Colonic mucosa (tissue), 4 donors: ENCODE measurements at regions of chr10 and their contacts with region 1.

Region 1: DNA sequence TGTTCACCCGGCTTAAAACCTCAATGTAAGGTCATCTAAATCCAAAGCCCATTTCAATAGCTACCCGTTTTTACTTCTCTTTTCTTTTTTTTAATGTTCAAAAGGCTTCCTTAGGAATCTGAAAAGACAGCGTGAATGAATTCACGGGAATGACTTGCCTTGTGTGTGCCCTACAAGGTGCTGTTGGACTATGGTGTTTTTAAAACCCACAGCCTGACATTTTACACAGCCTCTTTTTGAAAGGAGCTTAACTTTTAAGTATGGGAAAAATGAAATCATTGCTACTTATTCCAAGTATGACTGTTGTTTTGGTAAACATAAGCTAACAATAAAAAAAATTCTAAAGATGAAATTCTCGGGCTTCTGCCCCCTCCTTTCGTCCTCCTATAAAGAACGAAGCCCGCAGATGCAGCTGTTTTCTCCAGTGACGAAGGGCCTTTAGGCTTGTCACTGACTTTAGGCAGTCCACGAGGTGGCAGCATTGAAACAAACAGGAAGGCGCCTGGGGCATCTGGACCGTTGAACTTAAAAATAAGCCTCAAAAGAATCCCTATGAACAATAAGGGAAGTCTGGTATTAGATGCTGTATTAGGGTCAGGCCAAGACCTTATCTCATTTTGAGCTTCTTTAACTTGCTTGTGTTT is 141.3 kb downstream of the NRP1 start:
- DNase-seq: peak; percentile 86
- H3K4me3 ChIP-seq: no peak overlapping the region
- H3K27ac ChIP-seq: no peak overlapping the region
- H3K4me1 ChIP-seq: peaks cover 5% of the 10 kb centered on the region
- H3K27me3 ChIP-seq: no peaks in the 10 kb centered on the region
- CTCF ChIP-seq: peak; percentile 72

Region 2: GRCh38 chr10:32943854-32944661 is 249.1 kb before region 1 on chr10:
- intact Hi-C with region 1: no loop called
- DNase-seq: peak; percentile 42
- H3K4me3 ChIP-seq: no peak overlapping the region
- H3K27ac ChIP-seq: no peak overlapping the region
- H3K4me1 ChIP-seq: no peaks in the 10 kb centered on the region
- H3K27me3 ChIP-seq: no peaks in the 10 kb centered on the region
- CTCF ChIP-seq: no peak

Region 3: DNA sequence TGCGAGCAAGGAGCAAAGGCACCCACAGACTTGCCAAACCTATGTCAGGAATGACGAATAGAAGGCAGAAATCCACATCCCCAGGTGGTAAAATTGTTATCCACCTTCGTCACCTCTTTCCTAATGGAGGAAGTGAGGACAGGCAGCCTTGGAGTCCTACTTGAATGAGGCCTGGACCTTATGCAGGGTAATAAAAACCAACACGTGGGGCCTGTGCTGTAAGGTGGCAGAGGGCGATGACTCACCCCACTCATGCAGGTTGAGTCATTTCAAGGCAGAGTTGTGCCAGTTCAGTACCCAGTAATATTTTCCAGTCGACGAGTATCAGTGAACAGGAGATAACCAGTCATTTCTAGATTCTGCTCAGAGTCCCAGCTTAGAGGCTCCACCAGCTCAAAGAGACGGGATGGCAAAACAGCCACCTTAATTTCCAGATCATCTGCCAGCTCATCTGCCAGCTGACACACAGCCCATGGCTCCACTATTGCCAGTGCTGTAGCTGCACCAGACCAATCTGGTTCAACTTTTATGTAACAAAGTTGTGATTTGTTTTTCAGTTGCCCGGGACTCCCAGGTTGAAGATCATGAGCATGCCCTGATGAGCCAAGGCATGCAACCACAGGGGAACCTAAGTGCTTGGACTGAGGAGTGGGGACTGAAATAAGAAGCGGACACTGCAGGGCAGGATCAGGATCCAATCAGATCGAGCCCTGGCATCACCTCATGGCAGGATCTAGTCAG is 59.0 kb before region 1 on chr10:
- intact Hi-C with region 1: no loop called
- DNase-seq: peak; percentile 78
- H3K4me3 ChIP-seq: no peak overlapping the region
- H3K27ac ChIP-seq: peak overlapping the region; percentile 54
- H3K4me1 ChIP-seq: no peaks in the 10 kb centered on the region
- H3K27me3 ChIP-seq: no peaks in the 10 kb centered on the region
- CTCF ChIP-seq: no peak

Region 4: GRCh38 chr10:33330543-33331378 is 137.6 kb after region 1 on chr10:
- intact Hi-C with region 1: loop called (anchors 10 kb)
- DNase-seq: peak; percentile 90
- H3K4me3 ChIP-seq: no peak overlapping the region
- H3K27ac ChIP-seq: no peak overlapping the region
- H3K4me1 ChIP-seq: peaks cover 3% of the 10 kb centered on the region
- H3K27me3 ChIP-seq: no peaks in the 10 kb centered on the region
- CTCF ChIP-seq: peak; percentile 91

Region 5: GRCh38 chr10:33643042-33643441 is 449.9 kb after region 1 on chr10:
- intact Hi-C with region 1: no loop called
- DNase-seq: no peak
- H3K4me3 ChIP-seq: no peak overlapping the region
- H3K27ac ChIP-seq: no peak overlapping the region
- H3K4me1 ChIP-seq: no peaks in the 10 kb centered on the region
- H3K27me3 ChIP-seq: no peaks in the 10 kb centered on the region
- CTCF ChIP-seq: no peak